ENCODE measurements at regions of chr13 and their contacts with region 1.

Region 1: GRCh38 chr13:24727731-24728601 is 36.0 kb upstream of the RNF17 start:
- DNase-seq: peak; percentile 75
- H3K4me3 Mint-ChIP-seq: no peak overlapping the region
- H3K27ac Mint-ChIP-seq: no peak overlapping the region
- H3K4me1 Mint-ChIP-seq: no peaks in the 10 kb centered on the region
- H3K27me3 Mint-ChIP-seq: peaks cover 6% of the 10 kb centered on the region

Region 2: GRCh38 chr13:23579072-23579895 is 1148.7 kb before region 1 on chr13:
- CTCF ChIA-PET with region 1: no interaction called
- POLR2A ChIA-PET with region 1: no interaction called
- intact Hi-C with region 1: no loop called
- DNase-seq: peak; percentile 94
- H3K4me3 Mint-ChIP-seq: peak overlapping the region; percentile 75
- H3K27ac Mint-ChIP-seq: no peak overlapping the region
- H3K4me1 Mint-ChIP-seq: peaks cover 14% of the 10 kb centered on the region
- H3K27me3 Mint-ChIP-seq: peaks cover 33% of the 10 kb centered on the region

Region 3: DNA sequence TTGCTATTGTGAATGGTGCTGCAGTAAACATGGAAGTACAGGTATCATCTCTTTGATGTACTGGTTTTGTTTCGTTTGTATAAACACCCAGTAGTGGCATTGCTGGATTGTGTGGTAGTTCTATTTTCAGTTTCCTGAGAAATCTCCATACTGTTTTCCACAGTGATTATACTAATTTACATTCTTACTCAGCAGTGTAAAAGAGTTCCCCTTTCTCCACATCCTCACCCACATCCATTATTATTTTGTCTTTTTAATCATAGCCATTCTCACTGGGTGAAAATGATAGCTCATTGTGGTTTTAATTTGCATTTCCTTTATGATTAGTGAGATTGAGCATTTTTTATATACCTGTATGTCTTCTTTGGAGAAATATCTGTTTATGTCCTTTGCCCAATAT is 153.1 kb before region 1 on chr13:
- CTCF ChIA-PET with region 1: interaction called, 5 read pairs
- POLR2A ChIA-PET with region 1: no interaction called
- intact Hi-C with region 1: loop called (anchors 2 kb)
- DNase-seq: no peak
- H3K4me3 Mint-ChIP-seq: no peak overlapping the region
- H3K27ac Mint-ChIP-seq: peak overlapping the region; percentile 5
- H3K4me1 Mint-ChIP-seq: peaks cover 15% of the 10 kb centered on the region
- H3K27me3 Mint-ChIP-seq: peaks cover 11% of the 10 kb centered on the region

Region 4: DNA sequence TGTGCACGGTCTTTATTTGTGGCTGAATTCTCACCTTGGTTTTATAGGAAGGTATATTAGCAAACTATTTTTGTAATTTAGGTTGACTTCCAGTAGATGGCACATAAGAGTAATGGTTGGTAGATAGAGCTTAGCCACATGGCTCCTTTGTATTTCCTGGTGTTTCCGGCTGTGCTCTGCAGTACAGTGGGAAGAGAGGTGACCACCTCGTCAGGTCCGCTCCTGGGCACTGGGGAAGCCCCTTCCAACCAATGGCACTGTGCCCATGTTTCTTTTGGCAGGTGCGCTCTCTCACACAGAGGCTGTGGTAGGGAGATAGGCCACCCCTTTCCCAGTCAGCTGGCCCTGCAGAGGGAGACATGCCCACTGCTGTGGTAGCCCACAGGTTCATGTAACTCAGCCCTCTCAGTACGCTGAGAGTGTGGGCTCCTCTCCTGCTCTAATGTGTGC is 122.0 kb before region 1 on chr13:
- CTCF ChIA-PET with region 1: interaction called, 21 read pairs
- POLR2A ChIA-PET with region 1: no interaction called
- intact Hi-C with region 1: loop called (anchors 1 kb)
- DNase-seq: no peak
- H3K4me3 Mint-ChIP-seq: no peak overlapping the region
- H3K27ac Mint-ChIP-seq: no peak overlapping the region
- H3K4me1 Mint-ChIP-seq: peaks cover 11% of the 10 kb centered on the region
- H3K27me3 Mint-ChIP-seq: peaks cover 4% of the 10 kb centered on the region

Region 5: GRCh38 chr13:24683838-24684599 is 43.9 kb before region 1 on chr13:
- CTCF ChIA-PET with region 1: interaction called, 16 read pairs
- POLR2A ChIA-PET with region 1: interaction called, 5 read pairs
- intact Hi-C with region 1: loop called (anchors 1 kb)
- DNase-seq: peak; percentile 79
- H3K4me3 Mint-ChIP-seq: peak overlapping the region; percentile 23
- H3K27ac Mint-ChIP-seq: no peak overlapping the region
- H3K4me1 Mint-ChIP-seq: peaks cover 30% of the 10 kb centered on the region
- H3K27me3 Mint-ChIP-seq: peaks cover 34% of the 10 kb centered on the region

Region 6: DNA sequence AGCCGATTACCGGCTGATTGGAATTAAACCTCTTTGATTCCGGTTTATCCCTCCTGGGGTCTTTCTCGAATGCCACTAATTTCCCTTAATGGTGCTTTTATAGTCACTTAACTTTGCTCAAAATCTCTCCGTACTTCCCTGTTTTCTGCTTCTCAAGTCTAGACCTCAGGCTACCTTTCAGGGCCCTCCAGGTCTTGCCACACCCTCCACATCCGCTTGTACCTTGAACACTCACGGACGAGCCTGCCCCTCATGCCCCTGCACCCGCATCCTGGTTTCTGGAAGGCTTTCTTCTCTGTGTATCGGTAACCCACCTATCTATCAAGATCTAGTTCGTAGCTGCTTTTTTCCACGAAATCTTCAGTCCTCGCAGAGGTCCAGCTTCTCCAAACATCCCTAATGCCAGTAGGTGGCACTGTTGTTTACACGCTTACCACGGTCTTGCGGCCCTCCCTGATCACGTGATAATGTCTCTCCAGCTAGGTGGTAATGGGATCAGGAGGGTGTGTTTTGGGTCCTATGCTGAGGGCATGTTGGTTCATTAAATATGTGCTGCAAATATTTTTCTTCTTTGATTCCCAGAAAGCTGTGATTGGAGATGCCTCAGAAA is 34.0 kb before region 1 on chr13:
- CTCF ChIA-PET with region 1: interaction called, 74 read pairs
- POLR2A ChIA-PET with region 1: no interaction called
- intact Hi-C with region 1: loop called (anchors 1 kb)
- DNase-seq: peak; percentile 56
- H3K4me3 Mint-ChIP-seq: no peak overlapping the region
- H3K27ac Mint-ChIP-seq: no peak overlapping the region
- H3K4me1 Mint-ChIP-seq: peaks cover 6% of the 10 kb centered on the region
- H3K27me3 Mint-ChIP-seq: peaks cover 51% of the 10 kb centered on the region

Region 7: DNA sequence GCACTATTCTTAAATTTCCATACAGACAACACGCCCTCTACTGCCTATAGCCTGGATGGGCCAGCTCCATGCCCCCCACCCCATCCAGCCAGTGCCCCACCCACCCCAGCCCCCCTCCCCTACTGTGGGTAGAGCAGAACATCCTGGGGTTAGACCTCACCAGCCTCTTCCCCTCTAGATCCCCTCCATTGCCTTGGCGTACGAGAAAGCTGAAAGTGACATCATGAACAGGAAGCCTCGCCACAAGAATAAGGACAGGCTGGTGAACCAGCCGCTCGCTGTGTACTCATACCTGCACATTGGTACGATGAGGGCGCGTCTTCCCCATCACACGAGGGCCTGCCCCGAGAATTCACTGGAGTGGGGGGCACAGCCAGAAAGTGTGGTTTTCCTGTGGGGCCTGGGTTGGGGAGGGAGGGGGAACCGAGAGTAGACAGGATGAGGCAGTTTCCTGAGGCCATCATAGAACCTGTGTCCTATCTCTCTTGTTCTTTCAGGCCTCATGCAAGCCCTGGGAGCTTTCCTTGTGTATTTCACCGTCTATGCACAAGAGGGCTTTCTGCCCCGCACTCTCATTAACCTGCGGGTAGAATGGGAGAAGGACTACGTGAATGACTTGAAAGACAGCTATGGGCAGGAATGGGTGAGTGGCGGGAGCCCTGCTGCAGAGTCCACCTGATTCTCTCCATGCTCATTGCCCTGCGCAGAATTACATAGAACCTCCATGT is 18.6 kb before region 1 on chr13:
- CTCF ChIA-PET with region 1: interaction called, 13 read pairs
- POLR2A ChIA-PET with region 1: interaction called, 3 read pairs
- intact Hi-C with region 1: loop called (anchors 2 kb)
- DNase-seq: peak; percentile 88
- H3K4me3 Mint-ChIP-seq: no peak overlapping the region
- H3K27ac Mint-ChIP-seq: peak overlapping the region; percentile 62
- H3K4me1 Mint-ChIP-seq: peaks cover 14% of the 10 kb centered on the region
- H3K27me3 Mint-ChIP-seq: peaks cover 1% of the 10 kb centered on the region

Region 8: GRCh38 chr13:25109341-25109740 is 381.4 kb after region 1 on chr13:
- CTCF ChIA-PET with region 1: no interaction called
- POLR2A ChIA-PET with region 1: no interaction called
- intact Hi-C with region 1: no loop called
- DNase-seq: no peak
- H3K4me3 Mint-ChIP-seq: no peak overlapping the region
- H3K27ac Mint-ChIP-seq: no peak overlapping the region
- H3K4me1 Mint-ChIP-seq: no peaks in the 10 kb centered on the region
- H3K27me3 Mint-ChIP-seq: peaks cover 9% of the 10 kb centered on the region

Measured in activated CD4-positive, alpha-beta memory T cell treated with anti-CD3 and anti-CD28 coated beads for 36 hours (primary cell).